Ovary (tissue), 10 donors: ENCODE measurements at regions of chr14 and their contacts with region 1.

Region 1: DNA sequence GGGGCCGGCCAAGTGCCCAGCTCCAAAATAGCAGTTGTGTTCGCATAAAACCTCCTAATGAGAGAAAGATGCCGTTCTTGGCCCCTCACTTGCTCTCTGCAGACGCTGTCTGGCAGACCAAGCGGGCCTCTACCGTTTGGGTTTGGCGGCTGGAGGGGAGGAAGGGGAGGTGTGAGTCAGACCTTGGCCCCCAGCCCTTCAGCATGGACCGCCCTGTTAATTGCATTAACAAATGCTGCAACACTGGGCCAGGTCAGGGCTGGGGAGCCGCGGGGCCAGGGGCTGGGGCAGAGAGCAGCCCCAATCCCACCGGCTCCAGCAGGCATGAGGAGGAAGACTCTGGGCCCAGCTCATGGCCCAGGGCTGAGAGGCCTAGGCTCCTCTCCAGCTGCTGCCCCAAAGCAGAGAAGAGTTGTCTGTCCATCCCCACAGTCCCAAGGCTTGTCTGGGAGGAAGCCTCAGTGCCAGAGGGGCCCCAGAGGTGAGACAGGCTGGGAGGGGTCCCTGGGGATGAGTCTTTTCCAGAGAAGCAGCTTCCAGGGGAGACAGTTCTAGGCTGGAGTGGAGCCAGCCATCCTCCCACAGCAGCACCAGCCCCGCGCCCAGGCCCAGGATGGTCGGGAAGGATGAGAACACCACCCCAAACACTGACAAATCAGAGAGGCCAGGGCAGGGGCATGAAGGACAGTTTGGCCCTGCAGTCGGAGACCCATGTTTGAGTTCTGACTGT is 16.9 kb downstream of the LTBP2 start:
- DNase-seq: peak; percentile 83 to 88 (median 86)
- H3K4me3 ChIP-seq: no peak overlapping the region
- H3K27ac ChIP-seq: peak overlapping the region; percentile 71 to 73
- H3K4me1 ChIP-seq: peaks cover 62% of the 10 kb centered on the region
- H3K27me3 ChIP-seq: no peaks in the 10 kb centered on the region
- CTCF ChIP-seq: no peak
- EP300 ChIP-seq: no peak
- POLR2A ChIP-seq: no peak

Region 2: GRCh38 chr14:73903028-73903427 is 692.1 kb before region 1 on chr14:
- intact Hi-C with region 1: no loop called
- DNase-seq: no peak
- H3K4me3 ChIP-seq: no peak overlapping the region
- H3K27ac ChIP-seq: no peak overlapping the region
- H3K4me1 ChIP-seq: no peaks in the 10 kb centered on the region
- H3K27me3 ChIP-seq: no peaks in the 10 kb centered on the region
- CTCF ChIP-seq: no peak
- EP300 ChIP-seq: no peak
- POLR2A ChIP-seq: no peak

Region 3: GRCh38 chr14:74514471-74514941 is 80.7 kb before region 1 on chr14:
- intact Hi-C with region 1: loop called in 1 of 4 experiments (anchors 5 kb)
- DNase-seq: peak in 3 of 5 donors; percentile 47 to 60 (median 50)
- H3K4me3 ChIP-seq: no peak overlapping the region
- H3K27ac ChIP-seq: peak overlapping the region; percentile 1 to 23
- H3K4me1 ChIP-seq: peaks cover 2% of the 10 kb centered on the region
- H3K27me3 ChIP-seq: no peaks in the 10 kb centered on the region
- CTCF ChIP-seq: no peak
- EP300 ChIP-seq: no peak
- POLR2A ChIP-seq: no peak

Region 4: DNA sequence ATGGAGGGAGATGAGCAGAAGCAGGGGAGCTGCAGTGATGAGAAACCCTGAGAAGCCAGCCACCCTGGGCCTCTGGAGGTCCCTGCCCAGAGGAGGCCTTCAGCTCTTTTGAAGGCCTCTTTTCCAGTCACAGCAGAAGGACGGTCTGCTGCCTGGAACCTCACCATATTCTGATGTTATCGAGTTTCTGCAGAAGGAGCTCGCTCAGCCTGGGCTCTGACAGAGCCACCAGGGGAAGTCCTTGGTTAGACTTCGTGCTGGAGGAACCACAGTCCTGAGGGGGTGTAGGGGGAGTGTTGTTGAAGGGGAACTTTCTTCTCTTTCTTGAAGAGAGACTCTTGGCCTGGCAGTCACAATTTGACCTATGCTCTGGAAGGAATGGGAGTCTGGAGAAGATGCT is 902.0 kb after region 1 on chr14:
- intact Hi-C with region 1: no loop called
- DNase-seq: no peak
- H3K4me3 ChIP-seq: no peak overlapping the region
- H3K27ac ChIP-seq: no peak overlapping the region
- H3K4me1 ChIP-seq: no peaks in the 10 kb centered on the region
- H3K27me3 ChIP-seq: no peaks in the 10 kb centered on the region
- CTCF ChIP-seq: no peak
- EP300 ChIP-seq: no peak
- POLR2A ChIP-seq: no peak